ENCODE measurements at regions of chr11 and their contacts with region 1.

Region 1: GRCh38 chr11:5624489-5625279 is at the start of gene TRIM34:
- DNase-seq: peak; percentile 64
- H3K4me3 Mint-ChIP-seq: peak within 1 kb of the TSS; percentile 83
- H3K27ac Mint-ChIP-seq: peak within 1 kb of the TSS; percentile 81
- H3K4me1 Mint-ChIP-seq: peaks cover 47% of the 10 kb centered on the region
- H3K27me3 Mint-ChIP-seq: no peaks in the 10 kb centered on the region
- CTCF ChIP-seq: no peak
- total RNA-seq, gene TRIM34: 9.9 and 13.1 TPM in 2 replicates

Region 2: DNA sequence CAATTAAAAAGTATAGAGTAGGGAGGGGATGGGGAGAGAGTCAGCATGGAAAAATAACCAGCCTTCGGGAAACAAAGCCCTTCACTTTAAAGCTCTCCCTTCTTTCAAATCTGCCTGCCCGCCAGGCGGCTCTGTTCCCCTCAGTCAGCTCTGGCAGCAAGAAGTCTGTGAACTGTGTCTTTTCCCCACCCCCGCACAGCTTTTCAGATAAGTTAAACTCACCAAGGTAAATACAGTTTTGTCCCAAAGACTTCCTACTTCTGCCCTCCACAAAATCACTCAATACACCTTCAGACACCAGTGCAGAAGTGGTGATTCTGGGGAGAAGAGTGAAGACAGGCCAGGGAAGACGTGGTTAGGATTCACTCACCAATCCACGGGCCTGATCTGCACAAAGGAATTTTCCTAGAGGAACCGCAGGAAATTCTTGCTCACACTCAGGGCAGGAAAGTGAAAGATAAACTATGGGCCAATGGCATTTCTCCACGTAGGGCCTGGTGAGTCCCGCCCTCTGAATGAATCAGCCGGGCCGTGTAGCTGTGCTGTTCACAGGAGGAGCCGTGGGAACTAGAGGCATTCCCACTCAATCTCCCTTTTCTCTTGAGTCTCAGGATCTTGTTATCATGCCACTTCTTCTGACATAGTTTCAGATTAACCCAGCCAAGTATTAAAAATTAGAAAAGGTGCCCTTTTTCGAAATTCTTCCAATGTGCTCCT is 60.1 kb after region 1 on chr11 and contains the start of gene TRIM5:
- CTCF ChIA-PET with region 1: interaction called, 4 read pairs
- intact Hi-C with region 1: loop called (anchors 2 kb)
- DNase-seq: peak; percentile 88
- H3K4me3 Mint-ChIP-seq: peak within 1 kb of the TSS; percentile 94
- H3K27ac Mint-ChIP-seq: peak within 1 kb of the TSS; percentile 99
- H3K4me1 Mint-ChIP-seq: peaks cover 13% of the 10 kb centered on the region
- H3K27me3 Mint-ChIP-seq: no peaks in the 10 kb centered on the region
- CTCF ChIP-seq: peak; percentile 32
- total RNA-seq, gene TRIM5: 36.8 and 44.1 TPM in 2 replicates

Measured in Calu3 (cell line).